SK-N-SH (cell line): ENCODE measurements at regions of chr10 and their contacts with region 1.

Region 1: GRCh38 chr10:122980209-122981065 is at the start of gene PSTK:
- DNase-seq: peak; percentile 97
- H3K4me3 ChIP-seq: peak within 1 kb of the TSS; percentile 76 to 87
- H3K27ac ChIP-seq: peak within 1 kb of the TSS; percentile 86 to 97
- H3K4me1 ChIP-seq: peaks cover 4 to 6% of the 10 kb centered on the region in 2 experiments; a peak in 2 of 4 replicates
- H3K27me3 ChIP-seq: no peaks in the 10 kb centered on the region
- CTCF ChIP-seq: peak; percentile 73
- EP300 ChIP-seq: no peak
- RAD21 ChIP-seq: peak; percentile 26
- polyA plus RNA-seq, gene PSTK: 8.4 and 9.5 TPM in 2 replicates

Region 2: DNA sequence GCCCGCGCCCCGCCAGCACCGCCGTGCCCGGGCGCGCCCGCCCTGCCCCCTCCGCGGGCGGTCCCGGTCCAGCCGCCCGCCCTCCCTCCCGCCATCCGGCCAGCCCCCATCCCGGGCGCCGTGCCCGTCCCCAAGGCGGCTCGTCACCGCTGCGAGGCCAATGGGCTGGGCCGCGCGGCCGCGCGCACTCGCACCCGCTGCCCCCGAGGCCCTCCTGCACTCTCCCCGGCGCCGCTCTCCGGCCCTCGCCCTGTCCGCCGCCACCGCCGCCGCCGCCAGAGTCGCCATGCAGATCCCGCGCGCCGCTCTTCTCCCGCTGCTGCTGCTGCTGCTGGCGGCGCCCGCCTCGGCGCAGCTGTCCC is 519.1 kb before region 1 on chr10 and contains the start of gene HTRA1:
- CTCF ChIA-PET with region 1: no interaction called
- POLR2A ChIA-PET with region 1: no interaction called
- DNase-seq: peak; percentile 84
- H3K4me3 ChIP-seq: peak within 1 kb of the TSS; percentile 65 to 81
- H3K27ac ChIP-seq: peak within 1 kb of the TSS in 1 of 2 experiments; percentile 57; a peak in 2 of 4 replicates
- H3K4me1 ChIP-seq: peaks cover 5 to 19% of the 10 kb centered on the region in 2 experiments; a peak in 2 of 4 replicates
- H3K27me3 ChIP-seq: no peaks in the 10 kb centered on the region
- CTCF ChIP-seq: no peak
- EP300 ChIP-seq: no peak
- RAD21 ChIP-seq: no peak
- polyA plus RNA-seq, gene HTRA1: 291 and 339 TPM in 2 replicates

Region 3: GRCh38 chr10:122999347-122999746 is 18.9 kb after region 1 on chr10:
- CTCF ChIA-PET with region 1: interaction called, 18 read pairs
- POLR2A ChIA-PET with region 1: no interaction called
- DNase-seq: no peak
- H3K4me3 ChIP-seq: no peak overlapping the region
- H3K27ac ChIP-seq: no peak overlapping the region
- H3K4me1 ChIP-seq: no peaks in the 10 kb centered on the region
- H3K27me3 ChIP-seq: no peaks in the 10 kb centered on the region
- CTCF ChIP-seq: no peak
- EP300 ChIP-seq: no peak
- RAD21 ChIP-seq: no peak

Region 4: GRCh38 chr10:123062726-123063125 is 82.3 kb after region 1 on chr10:
- CTCF ChIA-PET with region 1: no interaction called
- POLR2A ChIA-PET with region 1: no interaction called
- DNase-seq: no peak
- H3K4me3 ChIP-seq: no peak overlapping the region
- H3K27ac ChIP-seq: no peak overlapping the region
- H3K4me1 ChIP-seq: no peaks in the 10 kb centered on the region
- H3K27me3 ChIP-seq: no peaks in the 10 kb centered on the region
- CTCF ChIP-seq: no peak
- EP300 ChIP-seq: no peak
- RAD21 ChIP-seq: no peak

Region 5: GRCh38 chr10:123318516-123318915 is 338.1 kb after region 1 on chr10:
- CTCF ChIA-PET with region 1: no interaction called
- POLR2A ChIA-PET with region 1: no interaction called
- DNase-seq: no peak
- H3K4me3 ChIP-seq: no peak overlapping the region
- H3K27ac ChIP-seq: no peak overlapping the region
- H3K4me1 ChIP-seq: peaks cover 0 to 6% of the 10 kb centered on the region in 2 experiments; a peak in 2 of 4 replicates
- H3K27me3 ChIP-seq: no peaks in the 10 kb centered on the region
- CTCF ChIP-seq: no peak
- EP300 ChIP-seq: no peak
- RAD21 ChIP-seq: no peak